Activated T-helper 2 cell treated with anti-CD3 and anti-CD28 coated beads, Interferon-gamma antibody, Interleukin-2, Interleukin-4, amounts not matched to agents 10 μg/mL and 5 μg/mL and 100 μg/mL, durations not matched to agents 14 hours and 24 hours and 36 hours (primary cell): ENCODE measurements at regions of chr12 and their contacts with region 1.

Region 1: DNA sequence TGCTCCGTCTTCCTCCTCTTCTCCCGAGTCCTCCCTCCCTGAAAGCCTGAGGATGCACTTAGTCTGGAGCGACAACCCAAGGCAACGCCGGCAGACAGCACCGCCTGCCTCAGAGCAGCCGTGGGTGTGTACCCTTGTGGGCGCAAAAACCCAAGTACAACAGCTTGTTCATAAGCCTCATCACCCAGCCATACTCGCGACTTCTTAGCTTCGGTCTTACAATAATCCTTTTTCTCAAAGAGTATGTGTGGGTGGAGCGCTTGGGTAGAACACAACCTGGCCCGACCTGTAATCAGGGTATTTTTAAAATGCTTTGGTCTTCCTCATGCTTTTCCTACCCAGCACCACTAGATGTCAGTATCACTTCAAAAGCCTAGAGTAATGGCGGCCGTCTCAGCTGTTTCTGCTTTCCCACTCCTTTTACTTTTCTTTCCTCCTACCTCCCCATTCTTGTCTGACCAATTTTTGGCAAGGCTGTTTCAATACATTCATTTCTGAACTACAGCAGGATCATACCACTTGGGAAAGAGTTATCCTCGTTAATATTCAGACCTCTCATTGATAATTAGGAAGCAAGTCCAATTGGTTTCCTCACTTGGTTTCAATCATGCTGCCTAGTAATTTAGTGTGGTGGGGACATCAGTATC is 198.9 kb downstream of the EPS8 start:
- DNase-seq: peak; percentile 31
- H3K4me3 Mint-ChIP-seq: peak overlapping the region; percentile 69
- H3K27ac Mint-ChIP-seq: no peak overlapping the region
- H3K4me1 Mint-ChIP-seq: peaks cover 10% of the 10 kb centered on the region
- H3K27me3 Mint-ChIP-seq: peaks cover 1% of the 10 kb centered on the region

Region 2: GRCh38 chr12:15629761-15630160 is 39.5 kb after region 1 on chr12:
- intact Hi-C with region 1: no loop called
- DNase-seq: no peak
- H3K4me3 Mint-ChIP-seq: no peak overlapping the region
- H3K27ac Mint-ChIP-seq: no peak overlapping the region
- H3K4me1 Mint-ChIP-seq: no peaks in the 10 kb centered on the region
- H3K27me3 Mint-ChIP-seq: peaks cover 4% of the 10 kb centered on the region

Region 3: GRCh38 chr12:15644700-15645099 is 54.4 kb after region 1 on chr12:
- intact Hi-C with region 1: no loop called
- DNase-seq: no peak
- H3K4me3 Mint-ChIP-seq: no peak overlapping the region
- H3K27ac Mint-ChIP-seq: no peak overlapping the region
- H3K4me1 Mint-ChIP-seq: no peaks in the 10 kb centered on the region
- H3K27me3 Mint-ChIP-seq: no peaks in the 10 kb centered on the region

Region 4: GRCh38 chr12:15789220-15790171 is 199.2 kb after region 1 on chr12 and contains the start of gene EPS8:
- intact Hi-C with region 1: loop called (anchors 5 kb)
- DNase-seq: peak; percentile 84
- H3K4me3 Mint-ChIP-seq: peak within 1 kb of the TSS; percentile 76
- H3K27ac Mint-ChIP-seq: peak within 1 kb of the TSS; percentile 24
- H3K4me1 Mint-ChIP-seq: peaks cover 16% of the 10 kb centered on the region
- H3K27me3 Mint-ChIP-seq: peaks cover 63% of the 10 kb centered on the region
- total RNA-seq, gene EPS8: 2.7 and 2.8 TPM in 2 replicates

Region 5: DNA sequence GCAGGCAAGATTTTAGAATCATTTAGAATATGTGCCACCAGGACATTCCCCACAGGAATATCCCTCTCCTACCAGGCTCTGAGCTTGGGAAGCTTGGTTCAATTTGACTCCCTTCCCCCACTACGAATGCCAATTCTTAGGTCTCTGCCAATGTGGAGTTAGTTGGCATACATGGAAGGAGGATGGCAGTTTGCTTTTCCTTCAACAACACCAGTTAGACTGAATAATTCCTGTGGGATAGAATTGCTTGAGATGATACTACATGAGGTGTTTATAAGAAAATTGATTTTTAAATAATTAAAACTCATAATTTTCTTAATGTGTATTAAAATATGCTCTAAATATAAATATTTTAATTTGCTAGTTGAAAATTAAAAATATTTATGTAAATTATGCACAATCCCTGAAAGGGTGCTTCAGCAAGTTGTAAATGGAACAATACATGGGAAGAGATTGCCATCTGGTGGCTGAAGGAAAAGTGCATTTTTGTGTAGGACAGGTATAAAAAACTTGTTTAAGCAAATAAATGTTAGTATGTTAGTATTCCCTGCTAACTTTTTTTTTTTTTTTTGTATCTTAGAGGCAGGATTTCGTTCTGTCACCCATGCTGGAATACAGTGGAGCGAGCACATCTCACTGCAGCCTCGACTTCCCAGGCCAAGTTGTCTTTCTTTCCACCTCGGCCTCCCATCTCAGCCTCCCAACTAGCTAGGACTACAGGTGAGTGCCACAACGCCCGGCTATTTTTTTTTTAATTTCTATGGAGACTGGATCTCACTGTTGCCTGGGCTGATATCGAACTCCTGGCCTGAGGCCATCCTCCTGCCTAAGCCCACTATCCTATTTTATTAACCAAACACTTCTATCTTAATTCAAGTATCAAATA is 266.0 kb after region 1 on chr12:
- intact Hi-C with region 1: loop called (anchors 1 kb)
- DNase-seq: no peak
- H3K4me3 Mint-ChIP-seq: no peak overlapping the region
- H3K27ac Mint-ChIP-seq: no peak overlapping the region
- H3K4me1 Mint-ChIP-seq: no peaks in the 10 kb centered on the region
- H3K27me3 Mint-ChIP-seq: peaks cover 14% of the 10 kb centered on the region

Region 6: DNA sequence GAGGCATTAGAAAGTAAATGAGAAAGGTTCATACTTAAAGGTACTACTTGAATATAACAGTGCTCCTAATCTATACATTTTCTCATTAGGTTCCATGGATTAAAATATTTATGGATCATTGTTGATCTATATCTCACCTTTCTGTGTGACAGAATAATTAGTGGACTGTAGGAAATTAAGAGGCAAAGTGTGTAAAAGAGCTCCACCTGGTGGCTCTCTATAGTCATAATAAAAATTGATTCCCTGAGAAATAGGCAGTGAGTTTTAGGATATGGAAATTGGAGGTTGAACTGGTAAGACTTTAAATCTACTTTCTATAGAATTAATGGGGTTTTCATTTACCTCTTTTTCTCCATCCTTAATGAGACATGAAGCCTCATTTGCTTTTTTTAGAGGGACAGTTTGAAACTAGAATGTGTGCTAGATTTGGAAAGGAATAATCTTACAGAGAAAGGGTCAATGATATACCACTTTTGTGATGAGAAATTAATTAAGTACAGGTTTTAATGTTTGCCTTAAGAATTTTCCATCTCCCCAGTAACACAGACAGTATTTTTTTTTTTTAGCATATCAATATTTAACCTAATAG is 309.1 kb after region 1 on chr12:
- intact Hi-C with region 1: loop called (anchors 1 kb)
- DNase-seq: no peak
- H3K4me3 Mint-ChIP-seq: no peak overlapping the region
- H3K27ac Mint-ChIP-seq: no peak overlapping the region
- H3K4me1 Mint-ChIP-seq: peaks cover 7% of the 10 kb centered on the region
- H3K27me3 Mint-ChIP-seq: no peaks in the 10 kb centered on the region